ENCODE measurements at regions of chr10 and their contacts with region 1.

Region 1: DNA sequence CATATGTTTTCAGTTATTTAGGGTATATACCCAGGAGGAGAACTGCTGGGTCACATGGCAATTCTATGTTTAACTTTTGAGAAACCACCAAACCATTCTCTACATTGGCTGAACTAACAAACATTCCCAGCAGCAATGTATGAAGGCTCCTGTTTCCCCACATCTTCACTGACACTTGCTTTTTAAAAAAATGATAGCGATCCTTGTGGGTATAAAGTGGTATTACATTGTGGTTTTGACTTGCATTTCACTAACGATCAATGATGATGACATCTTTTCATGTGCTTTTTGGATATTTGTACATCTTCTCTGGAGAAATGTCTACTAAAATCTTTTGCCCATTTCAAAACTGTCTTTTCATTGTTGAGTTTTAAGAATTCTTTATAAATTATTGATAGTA is 51.2 kb upstream of the ANAPC16 start:
- DNase-seq: no peak
- ATAC-seq: no peak
- H3K4me3 ChIP-seq: no peak overlapping the region
- H3K27ac ChIP-seq: peak overlapping the region in 2 of 12 donors; percentile 18 to 36
- H3K4me1 ChIP-seq: peaks cover 0 to 28% (median 2%) of the 10 kb centered on the region in 12 donors
- H3K27me3 ChIP-seq: no peaks in the 10 kb centered on the region
- CTCF ChIP-seq: peak in 1 of 12 donors; percentile 18
- POLR2A ChIP-seq: no peak

Region 2: DNA sequence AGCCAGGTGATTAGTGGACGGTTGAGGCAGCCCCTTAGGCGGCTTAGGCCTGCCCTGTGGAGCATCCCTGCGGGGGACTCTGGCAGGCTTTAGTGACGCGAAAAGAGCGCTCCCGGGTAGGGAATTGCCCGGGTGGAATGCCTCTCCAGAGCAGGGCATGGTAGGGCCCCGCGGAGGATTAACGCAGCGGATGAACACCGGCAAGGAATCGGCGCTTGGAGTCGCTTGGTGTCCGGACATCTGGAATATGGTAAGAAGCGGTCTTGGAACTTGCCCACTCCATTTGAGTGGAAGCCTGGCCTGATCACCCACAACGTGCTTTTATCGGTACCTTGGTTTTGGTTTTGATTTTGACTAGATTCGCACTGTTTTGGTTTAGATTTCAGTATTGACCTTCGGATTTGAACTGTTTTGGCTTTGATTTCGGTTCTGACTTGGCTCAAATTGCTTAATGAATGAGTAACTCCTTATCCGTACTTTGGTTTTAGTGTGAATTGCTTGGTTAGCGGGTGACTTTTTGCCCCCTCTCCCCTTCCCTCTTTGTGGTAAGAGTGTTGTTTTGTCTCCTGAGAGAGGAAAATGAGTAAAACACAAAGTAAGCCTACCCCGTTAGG is 224.6 kb before region 1 on chr10:
- intact Hi-C with region 1: no loop called
- DNase-seq: no peak
- ATAC-seq: no peak
- H3K4me3 ChIP-seq: no peak overlapping the region
- H3K27ac ChIP-seq: no peak overlapping the region
- H3K4me1 ChIP-seq: no peaks in the 10 kb centered on the region
- H3K27me3 ChIP-seq: no peaks in the 10 kb centered on the region
- CTCF ChIP-seq: no peak
- POLR2A ChIP-seq: no peak

Region 3: DNA sequence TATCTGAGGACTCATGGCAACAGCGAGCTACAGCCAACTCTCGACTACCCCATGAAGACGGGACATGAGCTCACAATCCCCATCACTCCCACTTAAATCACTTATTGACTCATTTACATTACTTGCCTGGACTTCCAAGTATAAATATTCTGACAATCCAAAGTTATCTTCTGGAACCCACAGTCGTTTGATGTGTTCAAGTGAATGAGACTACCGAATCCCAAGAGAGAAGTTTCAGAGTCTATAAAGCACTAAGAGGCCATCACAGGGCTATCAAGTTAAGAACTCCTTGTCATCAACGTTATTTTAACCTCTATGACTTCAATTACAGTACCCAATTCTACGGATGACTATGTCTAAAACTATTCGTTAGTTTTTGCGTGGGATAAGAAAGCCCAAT is 39.7 kb after region 1 on chr10:
- intact Hi-C with region 1: loop called in 1 of 10 experiments (anchors 5 kb)
- DNase-seq: no peak
- ATAC-seq: peak in 1 of 4 donors; percentile 24
- H3K4me3 ChIP-seq: no peak overlapping the region
- H3K27ac ChIP-seq: peak overlapping the region in 1 of 12 donors; percentile 54
- H3K4me1 ChIP-seq: peaks cover 0 to 9% (median 0%) of the 10 kb centered on the region in 12 donors
- H3K27me3 ChIP-seq: no peaks in the 10 kb centered on the region
- CTCF ChIP-seq: no peak
- POLR2A ChIP-seq: no peak

Region 4: GRCh38 chr10:72981882-72982529 is 817.4 kb after region 1 on chr10:
- intact Hi-C with region 1: no loop called
- DNase-seq: peak in 1 of 5 donors; percentile 26
- ATAC-seq: peak in 3 of 4 donors; percentile 18 to 54 (median 37)
- H3K4me3 ChIP-seq: no peak overlapping the region
- H3K27ac ChIP-seq: no peak overlapping the region
- H3K4me1 ChIP-seq: no peaks in the 10 kb centered on the region
- H3K27me3 ChIP-seq: no peaks in the 10 kb centered on the region
- CTCF ChIP-seq: no peak
- POLR2A ChIP-seq: no peak

Measured in heart left ventricle (tissue), 16 donors.